Activated T-helper 2 cell treated with anti-CD3 and anti-CD28 coated beads, Interferon-gamma antibody, Interleukin-2, Interleukin-4, amounts not matched to agents 10 μg/mL and 5 μg/mL and 100 μg/mL, durations not matched to agents 14 hours and 24 hours and 36 hours (primary cell): ENCODE measurements at regions of chr16 and their contacts with region 1.

Region 1: GRCh38 chr16:70523076-70523742 is at the start of gene COG4:
- DNase-seq: peak; percentile 86
- H3K4me3 Mint-ChIP-seq: peak within 1 kb of the TSS; percentile 96
- H3K27ac Mint-ChIP-seq: peak within 1 kb of the TSS; percentile 98
- H3K4me1 Mint-ChIP-seq: peaks cover 41% of the 10 kb centered on the region
- H3K27me3 Mint-ChIP-seq: no peaks in the 10 kb centered on the region
- total RNA-seq, gene COG4: 37.9 and 44.5 TPM in 2 replicates

Region 2: GRCh38 chr16:70251629-70252354 is 271.4 kb before region 1 on chr16 and contains the start of gene EXOSC6:
- intact Hi-C with region 1: loop called (anchors 1 kb)
- DNase-seq: peak; percentile 92
- H3K4me3 Mint-ChIP-seq: peak within 1 kb of the TSS; percentile 87
- H3K27ac Mint-ChIP-seq: peak within 1 kb of the TSS; percentile 95
- H3K4me1 Mint-ChIP-seq: peaks cover 11% of the 10 kb centered on the region
- H3K27me3 Mint-ChIP-seq: no peaks in the 10 kb centered on the region
- total RNA-seq, gene EXOSC6: 32.0 and 32.6 TPM in 2 replicates

Region 3: DNA sequence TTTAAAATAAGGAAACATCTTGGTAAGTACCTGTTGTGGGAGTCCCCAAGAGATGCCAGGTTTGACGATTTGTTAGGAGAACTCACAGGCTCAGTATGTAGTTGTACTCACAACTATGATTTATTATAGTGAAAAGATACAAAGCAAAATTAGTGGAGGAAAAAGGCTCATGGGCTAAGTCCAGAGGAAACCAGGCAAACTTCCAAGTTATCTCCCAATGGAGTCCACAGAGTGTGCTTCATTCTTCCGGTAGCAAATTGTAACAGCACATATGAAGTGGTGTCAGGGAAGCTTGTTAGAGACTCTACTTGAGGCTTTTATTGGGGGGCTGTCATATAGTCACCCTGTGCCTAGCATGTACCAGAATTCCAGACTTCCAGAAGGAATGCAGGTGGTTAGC is 174.2 kb before region 1 on chr16:
- intact Hi-C with region 1: loop called (anchors 1 kb)
- DNase-seq: no peak
- H3K4me3 Mint-ChIP-seq: no peak overlapping the region
- H3K27ac Mint-ChIP-seq: peak overlapping the region; percentile 28
- H3K4me1 Mint-ChIP-seq: peaks cover 24% of the 10 kb centered on the region
- H3K27me3 Mint-ChIP-seq: no peaks in the 10 kb centered on the region

Region 4: DNA sequence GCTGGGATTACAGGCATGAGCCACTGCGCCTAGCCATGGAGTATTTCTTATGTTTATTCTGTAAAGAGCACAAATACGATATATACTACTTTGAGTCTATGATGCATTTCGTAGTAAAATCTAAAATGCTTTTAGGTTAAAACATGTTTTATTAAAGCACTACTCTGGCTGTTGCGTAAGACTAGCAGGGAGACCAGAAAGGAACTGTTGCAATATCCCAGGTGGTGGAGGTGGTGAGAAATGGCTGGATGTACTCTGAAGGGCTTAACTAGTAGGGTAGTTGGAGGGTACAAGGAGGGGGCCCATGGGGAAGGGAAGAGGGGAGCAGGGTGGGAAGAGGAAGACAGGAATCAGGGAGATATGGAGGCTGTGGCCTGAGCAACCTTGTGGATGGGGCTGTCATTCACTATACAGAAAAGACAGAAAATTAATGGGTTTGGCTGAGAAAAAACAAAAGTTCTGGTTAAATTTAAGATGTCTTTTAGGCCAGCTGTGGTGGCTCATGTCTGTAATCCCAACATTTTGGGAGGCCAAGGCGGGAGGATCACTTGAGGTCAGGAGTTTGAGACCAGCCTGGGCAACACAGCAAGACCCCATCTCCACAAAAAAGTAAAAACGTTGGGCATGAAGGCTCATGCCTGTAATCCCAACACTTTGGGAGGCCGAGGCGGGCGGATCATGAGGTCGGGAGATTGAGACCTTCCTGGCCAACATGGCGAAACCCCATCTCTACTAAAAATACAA is 120.1 kb before region 1 on chr16:
- intact Hi-C with region 1: loop called (anchors 5 kb)
- DNase-seq: no peak
- H3K4me3 Mint-ChIP-seq: no peak overlapping the region
- H3K27ac Mint-ChIP-seq: peak overlapping the region; percentile 8
- H3K4me1 Mint-ChIP-seq: peaks cover 36% of the 10 kb centered on the region
- H3K27me3 Mint-ChIP-seq: no peaks in the 10 kb centered on the region

Region 5: GRCh38 chr16:70478912-70479341 is 44.3 kb before region 1 on chr16:
- intact Hi-C with region 1: loop called (anchors 2 kb)
- DNase-seq: no peak
- H3K4me3 Mint-ChIP-seq: no peak overlapping the region
- H3K27ac Mint-ChIP-seq: peak overlapping the region; percentile 28
- H3K4me1 Mint-ChIP-seq: peaks cover 18% of the 10 kb centered on the region
- H3K27me3 Mint-ChIP-seq: no peaks in the 10 kb centered on the region

Region 6: GRCh38 chr16:70610273-70611223 is 87.3 kb after region 1 on chr16:
- intact Hi-C with region 1: no loop called
- DNase-seq: no peak
- H3K4me3 Mint-ChIP-seq: no peak overlapping the region
- H3K27ac Mint-ChIP-seq: no peak overlapping the region
- H3K4me1 Mint-ChIP-seq: no peaks in the 10 kb centered on the region
- H3K27me3 Mint-ChIP-seq: no peaks in the 10 kb centered on the region